ENCODE measurements at regions of chr12 and their contacts with region 1.

Region 1: DNA sequence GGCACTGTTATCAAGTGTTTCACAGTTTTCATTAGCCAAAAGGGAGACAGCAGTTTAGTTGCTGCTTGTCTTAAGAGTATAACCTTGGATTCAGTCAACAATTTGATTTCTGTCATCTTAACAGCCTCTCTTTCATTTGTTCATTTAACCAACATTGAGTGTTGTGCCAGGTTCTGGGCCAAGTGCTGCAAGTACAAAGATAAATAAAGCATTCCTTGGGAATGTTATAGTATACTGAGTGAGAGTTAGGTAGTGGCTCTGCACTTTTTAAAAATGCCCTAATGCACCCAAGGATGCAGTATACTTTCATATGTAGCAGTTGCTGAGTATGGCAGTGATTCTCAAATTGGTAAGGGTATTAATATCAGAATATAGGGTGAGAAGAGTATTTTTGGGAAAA is 15.4 kb downstream of the APAF1 start:
- DNase-seq: no peak
- H3K4me3 ChIP-seq: no peak overlapping the region
- H3K27ac ChIP-seq: no peak overlapping the region
- H3K27me3 ChIP-seq: no peaks in the 10 kb centered on the region
- CTCF ChIP-seq: no peak

Region 2: GRCh38 chr12:98483621-98484503 is 176.7 kb before region 1 on chr12:
- CTCF ChIA-PET with region 1: no interaction called
- POLR2A ChIA-PET with region 1: no interaction called
- DNase-seq: no peak
- H3K4me3 ChIP-seq: no peak overlapping the region
- H3K27ac ChIP-seq: no peak overlapping the region
- H3K27me3 ChIP-seq: peaks cover 4% of the 10 kb centered on the region
- CTCF ChIP-seq: no peak

Region 3: DNA sequence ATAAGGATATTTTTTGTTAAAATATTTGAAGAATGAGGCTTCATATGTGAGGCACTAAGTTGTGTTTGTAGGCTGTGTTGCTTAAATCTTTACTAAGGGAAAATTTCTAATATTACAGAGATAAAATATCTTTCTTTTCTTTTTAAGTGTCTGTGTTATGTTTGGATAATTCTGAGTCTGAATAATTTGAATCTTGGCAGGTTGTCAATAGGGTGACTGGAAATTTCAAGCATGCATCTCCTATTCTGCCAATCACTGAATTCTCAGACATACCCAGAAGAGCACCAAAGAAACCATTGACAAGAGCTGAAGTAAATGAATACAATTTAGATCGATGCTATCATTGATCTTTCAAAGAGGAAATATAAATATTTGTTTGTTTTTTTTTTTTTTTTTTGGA is 115.8 kb before region 1 on chr12:
- CTCF ChIA-PET with region 1: interaction called, 12 read pairs
- POLR2A ChIA-PET with region 1: no interaction called
- DNase-seq: no peak
- H3K4me3 ChIP-seq: no peak overlapping the region
- H3K27ac ChIP-seq: no peak overlapping the region
- H3K27me3 ChIP-seq: no peaks in the 10 kb centered on the region
- CTCF ChIP-seq: no peak

Region 4: DNA sequence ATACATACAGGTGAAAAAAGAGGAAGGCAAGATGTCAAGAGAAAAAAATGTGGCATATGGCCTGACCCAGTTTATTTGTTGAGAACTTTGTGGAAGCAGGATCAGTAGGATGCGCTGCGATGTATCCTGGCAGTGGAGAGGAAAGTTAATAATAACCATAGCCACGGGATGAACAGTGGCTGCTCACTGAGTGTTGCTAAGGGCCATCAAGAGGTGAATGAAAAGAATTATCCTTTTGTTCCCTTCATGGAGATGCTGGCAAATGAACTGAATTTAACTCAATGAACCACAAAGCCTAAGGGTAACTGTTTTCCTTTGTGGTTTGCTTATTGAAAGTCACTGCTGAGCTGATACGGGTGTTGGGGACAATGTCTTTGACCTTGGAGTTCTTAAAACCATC is 461.0 kb after region 1 on chr12:
- CTCF ChIA-PET with region 1: no interaction called
- POLR2A ChIA-PET with region 1: no interaction called
- DNase-seq: no peak
- H3K4me3 ChIP-seq: no peak overlapping the region
- H3K27ac ChIP-seq: no peak overlapping the region
- H3K27me3 ChIP-seq: no peaks in the 10 kb centered on the region
- CTCF ChIP-seq: no peak

Measured in AG04450 (cell line).